H1 (cell line): ENCODE measurements at regions of chr15 and their contacts with region 1.

Region 1: GRCh38 chr15:76311100-76311953 is at the start of gene ETFA:
- DNase-seq: peak; percentile 89 to 97
- H3K4me3 ChIP-seq: peak within 1 kb of the TSS; percentile 73 to 89 (median 86)
- H3K27ac ChIP-seq: peak within 1 kb of the TSS; percentile 55
- H3K4me1 ChIP-seq: peaks cover 0 to 3% (median 0%) of the 10 kb centered on the region in 4 experiments; a peak in 1 of 7 replicates
- H3K27me3 ChIP-seq: no peaks in the 10 kb centered on the region; a peak in 1 of 7 replicates
- CTCF ChIP-seq: no peak
- EP300 ChIP-seq: no peak
- POLR2A ChIP-seq: peak; percentile 82 to 95
- RAD21 ChIP-seq: no peak
- total RNA-seq, gene ETFA: 90.0 TPM in 2 replicates

Region 2: DNA sequence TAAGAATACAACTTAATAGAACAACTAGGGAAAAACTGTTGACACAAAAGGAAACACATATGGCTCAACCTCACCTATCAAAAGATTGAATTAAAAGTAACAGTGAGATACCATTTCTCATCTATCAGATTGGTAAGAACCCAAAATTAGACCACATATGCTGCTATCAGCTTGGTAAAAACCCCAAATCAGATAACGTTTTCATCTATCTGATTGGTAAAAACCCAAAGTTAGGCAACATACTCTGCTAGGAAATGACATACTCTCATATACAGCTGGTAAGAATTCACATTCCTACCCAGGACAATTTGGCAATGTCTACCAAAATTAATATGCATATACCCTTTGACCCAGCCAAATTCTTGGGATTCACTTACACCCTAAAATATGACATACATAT is 325.4 kb before region 1 on chr15:
- CTCF ChIA-PET with region 1: no interaction called
- POLR2A ChIA-PET with region 1: no interaction called
- DNase-seq: no peak
- H3K4me3 ChIP-seq: no peak overlapping the region
- H3K27ac ChIP-seq: no peak overlapping the region
- H3K4me1 ChIP-seq: peaks cover 0 to 3% (median 0%) of the 10 kb centered on the region in 4 experiments; a peak in 1 of 7 replicates
- H3K27me3 ChIP-seq: no peaks in the 10 kb centered on the region
- CTCF ChIP-seq: no peak
- EP300 ChIP-seq: no peak
- POLR2A ChIP-seq: no peak
- RAD21 ChIP-seq: no peak

Region 3: GRCh38 chr15:76098685-76099084 is 212.6 kb before region 1 on chr15:
- CTCF ChIA-PET with region 1: no interaction called
- POLR2A ChIA-PET with region 1: no interaction called
- DNase-seq: no peak
- H3K4me3 ChIP-seq: no peak overlapping the region
- H3K27ac ChIP-seq: no peak overlapping the region
- H3K4me1 ChIP-seq: peaks cover 0 to 5% (median 2%) of the 10 kb centered on the region in 4 experiments; a peak in 2 of 7 replicates
- H3K27me3 ChIP-seq: no peaks in the 10 kb centered on the region
- CTCF ChIP-seq: no peak
- EP300 ChIP-seq: no peak
- POLR2A ChIP-seq: no peak
- RAD21 ChIP-seq: no peak

Region 4: DNA sequence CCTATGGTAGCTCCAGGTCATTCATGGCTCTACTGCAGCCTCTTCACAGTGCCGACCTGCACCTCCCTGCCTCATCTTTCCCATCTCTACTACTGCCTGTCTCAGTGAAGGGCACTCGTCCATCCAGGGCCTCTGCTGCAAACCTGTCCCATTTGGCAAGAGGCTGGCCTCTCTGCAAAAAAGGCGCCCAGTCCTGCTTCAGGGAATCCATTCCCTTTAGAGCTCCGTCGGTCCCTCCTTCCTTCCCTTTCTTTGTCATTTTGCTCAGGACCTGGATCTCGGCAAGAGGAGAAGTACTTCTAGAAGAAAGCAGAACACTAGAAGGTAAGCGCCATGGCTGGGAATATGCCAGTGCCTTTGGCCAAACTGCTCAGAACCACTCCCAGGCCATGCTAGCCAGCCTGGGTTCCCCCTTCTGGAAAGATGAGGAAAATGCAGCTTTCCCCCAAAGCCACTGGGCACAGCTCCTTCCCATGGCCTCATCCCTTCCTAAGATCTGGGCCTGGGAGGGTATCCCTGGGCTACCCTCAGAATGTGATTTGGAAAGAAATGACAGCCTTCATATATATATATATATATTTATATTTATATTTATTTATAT is 18.9 kb after region 1 on chr15:
- CTCF ChIA-PET with region 1: interaction called, 39 read pairs
- POLR2A ChIA-PET with region 1: interaction called, 11 read pairs
- DNase-seq: peak in 1 of 2 experiments; percentile 66
- H3K4me3 ChIP-seq: no peak overlapping the region
- H3K27ac ChIP-seq: no peak overlapping the region
- H3K4me1 ChIP-seq: peaks cover 0 to 5% (median 3%) of the 10 kb centered on the region in 4 experiments; a peak in 6 of 7 replicates
- H3K27me3 ChIP-seq: peaks cover 0 to 13% (median 12%) of the 10 kb centered on the region in 4 experiments; a peak in 6 of 7 replicates
- CTCF ChIP-seq: peak; percentile 66 to 76 (median 72)
- EP300 ChIP-seq: no peak
- POLR2A ChIP-seq: no peak
- RAD21 ChIP-seq: peak; percentile 69 to 76

Region 5: GRCh38 chr15:76546803-76547202 is 235.5 kb after region 1 on chr15:
- CTCF ChIA-PET with region 1: no interaction called
- POLR2A ChIA-PET with region 1: no interaction called
- DNase-seq: no peak
- H3K4me3 ChIP-seq: no peak overlapping the region
- H3K27ac ChIP-seq: no peak overlapping the region
- H3K4me1 ChIP-seq: no peaks in the 10 kb centered on the region
- H3K27me3 ChIP-seq: no peaks in the 10 kb centered on the region; a peak in 1 of 7 replicates
- CTCF ChIP-seq: no peak
- EP300 ChIP-seq: no peak
- POLR2A ChIP-seq: no peak
- RAD21 ChIP-seq: no peak